Activated CD8-positive, alpha-beta T cell treated with anti-CD3 and anti-CD28 coated beads, Interleukin-2, amount 10 ng/mL, durations not matched to agents 7 days and 5 days (primary cell): ENCODE measurements at regions of chr1 and their contacts with region 1.

Region 1: GRCh38 chr1:109099938-109100773 is 9.6 kb downstream of the TMEM167B start:
- DNase-seq: peak; percentile 98
- ATAC-seq: peak; percentile 90
- H3K4me3 Mint-ChIP-seq: peak overlapping the region; percentile 97
- H3K27ac Mint-ChIP-seq: peak overlapping the region; percentile 97
- H3K4me1 Mint-ChIP-seq: peaks cover 8% of the 10 kb centered on the region
- H3K27me3 Mint-ChIP-seq: no peaks in the 10 kb centered on the region

Region 2: DNA sequence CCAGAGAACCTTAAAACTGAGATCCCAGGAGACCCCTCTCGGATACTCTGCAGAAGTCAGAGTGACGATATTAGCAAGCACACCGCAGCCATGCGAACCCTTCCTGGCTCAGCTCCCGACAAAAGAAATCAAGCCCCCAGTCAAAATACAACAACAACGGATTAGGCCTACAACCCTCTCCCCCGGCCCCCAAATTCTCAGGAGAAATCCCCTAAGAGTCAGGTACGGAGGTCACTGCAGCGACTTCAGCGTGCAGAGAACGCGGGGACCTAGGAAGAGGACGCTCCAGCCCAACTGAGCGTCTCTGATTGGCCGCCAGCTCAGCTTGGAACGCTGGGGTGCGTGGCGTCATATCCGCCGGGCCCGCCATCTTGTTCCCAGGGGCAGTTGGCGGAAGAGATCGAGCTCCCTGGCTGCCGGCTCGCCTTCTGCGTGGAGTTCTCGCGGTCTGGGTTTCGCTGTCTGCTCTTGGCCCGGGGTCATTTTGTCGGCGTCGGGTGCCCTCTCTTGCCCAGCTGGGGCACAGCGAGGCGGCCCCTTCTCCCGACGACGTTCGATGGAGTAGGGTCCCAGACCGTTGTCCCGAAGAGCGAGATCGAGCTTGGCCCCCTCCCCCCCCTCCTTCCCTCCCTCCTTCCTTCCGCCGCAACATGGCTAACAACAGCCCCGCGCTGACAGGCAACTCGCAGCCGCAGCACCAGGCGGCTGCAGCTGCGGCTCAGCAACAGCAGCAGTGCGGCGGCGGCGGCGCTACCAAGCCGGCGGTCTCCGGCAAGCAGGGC is 408.0 kb before region 1 on chr1 and contains the start of gene PRPF38B:
- CTCF ChIA-PET with region 1: no interaction called
- POLR2A ChIA-PET with region 1: interaction called, 21 read pairs
- DNase-seq: peak; percentile 97
- ATAC-seq: peak; percentile 89
- H3K4me3 Mint-ChIP-seq: peak within 1 kb of the TSS; percentile 96
- H3K27ac Mint-ChIP-seq: peak within 1 kb of the TSS; percentile 99
- H3K4me1 Mint-ChIP-seq: peaks cover 42% of the 10 kb centered on the region
- H3K27me3 Mint-ChIP-seq: no peaks in the 10 kb centered on the region
- total RNA-seq, gene PRPF38B: 66.8 to 69.1 TPM

Region 3: DNA sequence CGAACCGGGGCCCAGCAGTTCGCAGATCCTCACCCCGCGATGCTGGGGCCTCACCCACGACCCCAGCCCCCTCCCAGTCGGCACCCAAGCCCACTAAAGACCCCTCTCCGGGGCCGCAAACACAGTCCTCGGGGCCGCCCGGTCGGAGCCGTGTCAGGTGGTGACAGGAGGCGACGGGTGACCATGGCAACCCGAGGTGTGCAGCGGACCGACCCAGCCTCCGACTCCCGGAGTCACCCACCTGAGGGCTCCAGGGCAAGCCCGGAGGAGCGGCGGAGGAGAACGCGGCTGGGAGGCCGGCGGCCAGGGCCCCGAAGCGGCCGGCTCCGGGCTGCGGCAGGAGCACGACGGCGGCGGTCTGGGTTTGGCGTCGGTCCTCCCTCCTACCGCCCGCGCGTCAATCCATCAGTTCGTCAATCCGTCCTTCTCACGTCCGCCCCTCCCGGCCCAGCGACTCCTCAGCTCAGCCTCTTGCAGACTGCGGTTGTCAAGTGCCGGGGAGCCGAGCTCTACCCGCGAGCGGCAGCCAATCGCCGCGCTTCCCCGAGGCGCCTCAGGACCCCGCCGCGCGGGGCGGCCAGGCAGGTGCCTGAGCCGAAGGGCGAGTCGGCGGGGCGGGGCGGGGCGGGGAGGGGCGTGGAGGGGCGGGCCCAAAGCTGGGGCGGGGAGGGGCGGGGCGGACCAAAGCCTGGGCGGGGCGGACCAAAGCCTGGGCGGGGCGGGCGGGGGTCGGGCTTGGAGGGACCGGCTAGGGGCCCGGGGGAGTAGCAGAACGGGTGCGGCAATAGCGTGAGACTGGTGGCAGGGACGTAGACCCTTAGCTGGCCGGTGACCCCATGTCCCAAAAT is 58.3 kb before region 1 on chr1 and contains the start of gene WDR47:
- CTCF ChIA-PET with region 1: interaction called, 10 read pairs
- POLR2A ChIA-PET with region 1: interaction called, 7 read pairs
- DNase-seq: peak; percentile 97
- ATAC-seq: peak; percentile 98
- H3K4me3 Mint-ChIP-seq: peak within 1 kb of the TSS; percentile 87
- H3K27ac Mint-ChIP-seq: peak within 1 kb of the TSS; percentile 89
- H3K4me1 Mint-ChIP-seq: peaks cover 20% of the 10 kb centered on the region
- H3K27me3 Mint-ChIP-seq: peaks cover 9% of the 10 kb centered on the region
- total RNA-seq, gene WDR47: 13.1 to 14.8 TPM

Region 4: GRCh38 chr1:109075531-109076490 is 24.3 kb before region 1 on chr1 and contains the start of gene TAF13:
- CTCF ChIA-PET with region 1: interaction called, 16 read pairs
- POLR2A ChIA-PET with region 1: interaction called, 14 read pairs
- DNase-seq: peak; percentile 91
- ATAC-seq: peak; percentile 99
- H3K4me3 Mint-ChIP-seq: peak within 1 kb of the TSS; percentile 99
- H3K27ac Mint-ChIP-seq: peak within 1 kb of the TSS; percentile 99
- H3K4me1 Mint-ChIP-seq: peaks cover 20% of the 10 kb centered on the region
- H3K27me3 Mint-ChIP-seq: no peaks in the 10 kb centered on the region
- total RNA-seq, gene TAF13: 24.5 to 24.6 TPM

Region 5: GRCh38 chr1:109083923-109084322 is 16.2 kb before region 1 on chr1:
- CTCF ChIA-PET with region 1: interaction called, 38 read pairs
- POLR2A ChIA-PET with region 1: interaction called, 20 read pairs
- DNase-seq: no peak
- ATAC-seq: no peak
- H3K4me3 Mint-ChIP-seq: no peak overlapping the region
- H3K27ac Mint-ChIP-seq: peak overlapping the region; percentile 55
- H3K4me1 Mint-ChIP-seq: peaks cover 11% of the 10 kb centered on the region
- H3K27me3 Mint-ChIP-seq: no peaks in the 10 kb centered on the region

Region 6: GRCh38 chr1:109112652-109113285 is 12.6 kb after region 1 on chr1:
- CTCF ChIA-PET with region 1: interaction called, 80 read pairs
- POLR2A ChIA-PET with region 1: interaction called, 50 read pairs
- DNase-seq: peak; percentile 91
- ATAC-seq: peak; percentile 63
- H3K4me3 Mint-ChIP-seq: peak overlapping the region; percentile 72
- H3K27ac Mint-ChIP-seq: peak overlapping the region; percentile 58
- H3K4me1 Mint-ChIP-seq: peaks cover 33% of the 10 kb centered on the region
- H3K27me3 Mint-ChIP-seq: peaks cover 26% of the 10 kb centered on the region

Region 7: GRCh38 chr1:109151164-109151990 is 51.2 kb after region 1 on chr1:
- CTCF ChIA-PET with region 1: no interaction called
- POLR2A ChIA-PET with region 1: no interaction called
- DNase-seq: no peak
- ATAC-seq: no peak
- H3K4me3 Mint-ChIP-seq: no peak overlapping the region
- H3K27ac Mint-ChIP-seq: no peak overlapping the region
- H3K4me1 Mint-ChIP-seq: no peaks in the 10 kb centered on the region
- H3K27me3 Mint-ChIP-seq: no peaks in the 10 kb centered on the region

Region 8: DNA sequence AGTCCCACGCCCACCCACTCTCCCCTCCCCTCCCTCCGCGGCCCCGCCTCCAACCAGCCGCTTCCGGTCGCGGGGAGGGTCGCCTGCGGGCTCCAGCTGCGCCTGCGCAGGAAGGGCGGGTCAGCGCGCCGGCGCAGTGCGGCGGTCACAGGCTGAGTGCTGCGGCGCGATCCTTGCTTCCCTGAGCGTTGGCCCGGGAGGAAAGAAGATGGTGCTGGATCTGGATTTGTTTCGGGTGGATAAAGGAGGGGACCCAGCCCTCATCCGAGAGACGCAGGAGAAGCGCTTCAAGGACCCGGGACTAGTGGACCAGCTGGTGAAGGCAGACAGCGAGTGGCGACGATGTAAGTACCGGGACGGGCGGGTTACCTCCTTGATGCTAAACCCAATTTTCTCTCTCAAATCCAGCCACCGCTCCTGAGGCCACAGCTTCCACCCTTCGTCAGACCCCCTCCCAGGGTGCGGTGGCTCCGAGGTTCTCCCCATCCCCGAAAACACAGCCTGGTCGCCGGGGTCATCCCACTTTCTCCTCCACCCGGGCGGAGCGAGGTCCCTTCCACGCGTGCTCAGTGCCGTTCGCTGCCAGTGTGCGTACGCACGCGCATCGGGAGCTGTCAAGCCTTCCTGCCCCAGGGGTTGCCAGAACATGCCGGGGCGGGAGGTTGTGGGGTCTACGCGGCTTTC is 113.8 kb after region 1 on chr1 and contains the start of gene SARS1:
- CTCF ChIA-PET with region 1: interaction called, 8 read pairs
- POLR2A ChIA-PET with region 1: interaction called, 19 read pairs
- DNase-seq: peak; percentile 89
- ATAC-seq: peak; percentile 91
- H3K4me3 Mint-ChIP-seq: peak within 1 kb of the TSS; percentile 99
- H3K27ac Mint-ChIP-seq: peak within 1 kb of the TSS; percentile 85
- H3K4me1 Mint-ChIP-seq: peaks cover 33% of the 10 kb centered on the region
- H3K27me3 Mint-ChIP-seq: peaks cover 3% of the 10 kb centered on the region
- total RNA-seq, gene SARS1: 145 to 157 TPM

Region 9: DNA sequence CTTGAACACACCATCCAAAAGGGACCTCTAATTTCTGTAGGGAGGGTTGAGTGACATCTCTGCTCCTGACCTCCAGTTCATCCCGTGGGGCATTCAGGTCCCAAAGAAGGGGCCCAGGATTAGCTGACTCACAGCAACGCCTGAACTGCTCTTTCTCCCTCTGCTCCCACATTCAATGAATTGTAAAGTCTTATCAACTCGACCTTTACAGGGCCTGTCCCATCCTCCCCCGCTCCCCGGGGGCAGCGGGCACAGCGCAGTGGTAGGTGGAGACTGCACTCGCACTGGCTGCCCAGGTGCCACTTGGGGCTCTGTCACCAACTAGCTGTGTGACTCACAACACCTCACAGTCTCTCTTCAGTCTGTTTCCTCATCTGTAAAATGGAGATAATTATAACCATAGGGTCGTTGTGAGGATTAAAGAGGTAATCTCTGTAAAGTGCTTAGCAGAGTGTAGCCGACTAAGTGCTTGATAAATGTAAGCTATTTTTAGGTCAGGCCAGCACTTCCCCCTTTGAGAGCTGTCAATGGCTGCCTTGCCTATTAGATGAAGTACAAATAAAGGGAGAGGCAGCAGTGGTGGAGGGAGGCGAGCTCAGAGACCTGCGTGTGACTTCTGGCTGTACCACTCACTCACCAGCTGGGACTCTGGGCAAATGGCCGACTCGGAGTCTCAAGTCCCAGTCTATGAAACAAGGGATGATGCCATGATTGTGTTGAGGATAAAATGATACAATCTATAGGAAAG is 207.3 kb after region 1 on chr1:
- CTCF ChIA-PET with region 1: no interaction called
- POLR2A ChIA-PET with region 1: no interaction called
- DNase-seq: no peak
- ATAC-seq: no peak
- H3K4me3 Mint-ChIP-seq: no peak overlapping the region
- H3K27ac Mint-ChIP-seq: no peak overlapping the region
- H3K4me1 Mint-ChIP-seq: no peaks in the 10 kb centered on the region
- H3K27me3 Mint-ChIP-seq: peaks cover 3% of the 10 kb centered on the region